ENCODE measurements at regions of chr11 and their contacts with region 1.

Region 1: GRCh38 chr11:114262681-114263512 is 33.3 kb upstream of the NNMT start:
- DNase-seq: peak in 1 of 2 donors; percentile 80
- H3K4me3 ChIP-seq: no peak overlapping the region
- H3K27ac ChIP-seq: peak overlapping the region in 1 of 5 donors; percentile 8
- H3K4me1 ChIP-seq: peaks cover 21 to 49% (median 41%) of the 10 kb centered on the region in 4 donors
- H3K27me3 ChIP-seq: no peaks in the 10 kb centered on the region
- CTCF ChIP-seq: peak in 5 of 7 experiments; percentile 37 to 61 (median 47)
- EP300 ChIP-seq: no peak
- POLR2A ChIP-seq: no peak

Region 2: GRCh38 chr11:113896156-113896879 is 366.6 kb before region 1 on chr11:
- intact Hi-C with region 1: loop called (anchors 5 kb)
- DNase-seq: peak; percentile 37 to 77
- H3K4me3 ChIP-seq: no peak overlapping the region
- H3K27ac ChIP-seq: no peak overlapping the region
- H3K4me1 ChIP-seq: no peaks in the 10 kb centered on the region
- H3K27me3 ChIP-seq: no peaks in the 10 kb centered on the region
- CTCF ChIP-seq: peak in 5 of 7 experiments; percentile 50 to 76 (median 63)
- EP300 ChIP-seq: no peak
- POLR2A ChIP-seq: no peak

Region 3: DNA sequence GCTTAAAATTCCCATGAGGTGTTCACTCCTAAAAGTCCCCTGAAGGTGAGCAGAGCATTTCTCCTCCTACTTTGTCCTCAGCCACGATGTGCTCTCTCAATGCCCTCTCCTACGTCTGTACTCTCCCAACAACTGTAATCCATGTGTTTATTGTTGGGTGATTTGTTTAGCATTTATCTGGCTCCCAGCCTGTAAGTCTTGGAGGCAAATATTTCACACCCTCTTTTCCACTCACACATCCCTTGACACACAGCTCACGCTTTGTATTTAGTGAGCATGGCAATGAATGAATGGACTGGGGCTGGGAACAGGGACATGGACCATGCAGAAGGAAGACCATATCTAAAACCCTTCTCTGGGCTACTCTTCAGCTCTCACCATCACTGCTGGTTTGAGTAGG is 265.4 kb before region 1 on chr11:
- intact Hi-C with region 1: loop called (anchors 5 kb)
- DNase-seq: no peak
- H3K4me3 ChIP-seq: no peak overlapping the region
- H3K27ac ChIP-seq: peak overlapping the region in 1 of 5 donors; percentile 38
- H3K4me1 ChIP-seq: peaks cover 0 to 7% (median 0%) of the 10 kb centered on the region in 4 donors
- H3K27me3 ChIP-seq: peaks cover 0 to 58% (median 6%) of the 10 kb centered on the region in 3 donors
- CTCF ChIP-seq: no peak
- EP300 ChIP-seq: no peak
- POLR2A ChIP-seq: no peak

Region 4: GRCh38 chr11:114159802-114160632 is 102.9 kb before region 1 on chr11:
- intact Hi-C with region 1: no loop called
- DNase-seq: peak; percentile 99 to 100
- H3K4me3 ChIP-seq: peak overlapping the region in 2 of 4 donors; percentile 5 to 8
- H3K27ac ChIP-seq: peak overlapping the region; percentile 83 to 99 (median 95)
- H3K4me1 ChIP-seq: peaks cover 80 to 100% (median 94%) of the 10 kb centered on the region in 4 donors
- H3K27me3 ChIP-seq: no peaks in the 10 kb centered on the region
- CTCF ChIP-seq: peak in 1 of 7 experiments; percentile 6
- EP300 ChIP-seq: peak; percentile 100
- POLR2A ChIP-seq: peak in 1 of 4 donors; percentile 58

Measured in stomach (tissue), 19 donors.